ENCODE measurements at regions of chr7 and their contacts with region 1.

Region 1: DNA sequence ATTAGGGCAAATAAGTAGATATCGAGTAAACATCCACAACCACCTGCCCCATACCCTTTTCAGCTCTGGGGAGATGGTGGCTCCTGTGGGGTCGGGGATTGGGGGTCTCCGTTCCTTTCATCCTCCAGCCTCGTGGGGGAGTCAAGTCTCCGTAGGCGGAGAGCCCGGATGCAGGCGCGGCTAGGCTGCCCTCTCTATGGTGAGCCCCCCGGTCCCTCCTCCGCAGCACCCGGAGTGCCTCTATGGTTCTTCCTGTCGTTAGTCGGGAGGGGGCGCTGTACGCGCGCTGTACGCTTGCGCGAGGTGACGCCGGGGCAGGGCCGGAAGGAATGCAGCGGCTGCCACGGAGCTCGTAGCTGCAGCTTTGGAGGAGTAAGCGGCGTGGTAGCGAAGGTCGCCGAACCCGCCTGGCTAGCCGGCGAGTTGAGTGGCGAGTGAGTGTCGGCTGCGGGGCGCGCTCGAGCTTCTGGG is 14.8 kb upstream of the MMD2 start:
- DNase-seq: peak; percentile 69
- ATAC-seq: peak; percentile 96
- H3K4me3 ChIP-seq: peak overlapping the region; percentile 76; the same call in 1 of the 2 replicates
- H3K27ac ChIP-seq: peak overlapping the region; percentile 48
- H3K4me1 ChIP-seq: no peaks in the 10 kb centered on the region
- H3K27me3 ChIP-seq: no peaks in the 10 kb centered on the region
- CTCF ChIP-seq: peak; percentile 85 to 89 (median 86)
- EP300 ChIP-seq: no peak
- POLR2A ChIP-seq: peak; percentile 89
- RAD21 ChIP-seq: peak; percentile 76

Region 2: DNA sequence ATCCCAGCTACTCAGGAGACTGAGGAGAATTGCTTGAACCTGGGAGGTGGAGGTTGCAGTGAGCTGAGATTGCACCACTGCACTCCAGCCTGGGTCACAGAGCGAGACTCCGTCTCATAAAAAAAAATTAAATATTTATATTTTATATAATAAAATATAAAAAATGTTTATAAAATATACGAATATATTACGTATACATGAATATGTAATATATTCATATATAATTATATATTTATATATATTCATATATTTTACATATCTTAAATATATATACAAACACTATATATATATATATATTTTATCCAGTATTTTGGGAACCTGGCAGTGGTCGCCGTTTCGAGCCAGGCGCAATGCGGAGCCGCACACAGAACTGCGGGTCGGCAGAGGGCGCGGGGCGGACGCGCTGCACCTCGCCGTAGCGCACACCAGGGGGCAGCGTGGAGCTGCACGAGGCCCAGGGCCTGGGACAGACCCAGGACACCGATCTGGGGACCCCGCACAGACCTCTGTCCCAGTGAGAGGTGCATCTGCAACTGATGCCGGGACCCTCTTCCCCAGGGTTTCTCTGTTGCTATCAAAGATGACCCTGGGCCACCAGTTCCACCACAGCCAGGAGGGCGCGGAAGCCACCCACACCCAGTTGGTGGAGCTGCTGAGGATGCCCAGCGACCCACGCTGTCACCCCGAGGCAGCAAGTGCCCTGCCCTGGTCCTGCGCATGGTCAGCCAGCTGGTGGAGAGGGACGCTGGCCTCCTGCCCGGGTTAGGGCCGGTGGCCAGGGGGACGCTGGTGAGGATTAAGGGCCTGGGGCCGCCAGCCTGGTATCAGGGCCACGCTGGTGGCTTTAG is 175.7 kb before region 1 on chr7:
- CTCF ChIA-PET with region 1: interaction called, 3 read pairs
- POLR2A ChIA-PET with region 1: no interaction called
- RAD21 ChIA-PET with region 1: interaction called, 10 read pairs
- SMC1A ChIA-PET with region 1: no interaction called
- in situ Hi-C with region 1: no loop called
- intact Hi-C with region 1: loop called (anchors 10 kb)
- DNase-seq: no peak
- ATAC-seq: peak; percentile 92
- H3K4me3 ChIP-seq: no peak overlapping the region
- H3K27ac ChIP-seq: no peak overlapping the region
- H3K4me1 ChIP-seq: no peaks in the 10 kb centered on the region
- H3K27me3 ChIP-seq: no peaks in the 10 kb centered on the region
- CTCF ChIP-seq: peak; percentile 65 to 96 (median 85)
- EP300 ChIP-seq: no peak
- POLR2A ChIP-seq: no peak; the same call in 1 of the 2 replicates
- RAD21 ChIP-seq: peak; percentile 51

Region 3: DNA sequence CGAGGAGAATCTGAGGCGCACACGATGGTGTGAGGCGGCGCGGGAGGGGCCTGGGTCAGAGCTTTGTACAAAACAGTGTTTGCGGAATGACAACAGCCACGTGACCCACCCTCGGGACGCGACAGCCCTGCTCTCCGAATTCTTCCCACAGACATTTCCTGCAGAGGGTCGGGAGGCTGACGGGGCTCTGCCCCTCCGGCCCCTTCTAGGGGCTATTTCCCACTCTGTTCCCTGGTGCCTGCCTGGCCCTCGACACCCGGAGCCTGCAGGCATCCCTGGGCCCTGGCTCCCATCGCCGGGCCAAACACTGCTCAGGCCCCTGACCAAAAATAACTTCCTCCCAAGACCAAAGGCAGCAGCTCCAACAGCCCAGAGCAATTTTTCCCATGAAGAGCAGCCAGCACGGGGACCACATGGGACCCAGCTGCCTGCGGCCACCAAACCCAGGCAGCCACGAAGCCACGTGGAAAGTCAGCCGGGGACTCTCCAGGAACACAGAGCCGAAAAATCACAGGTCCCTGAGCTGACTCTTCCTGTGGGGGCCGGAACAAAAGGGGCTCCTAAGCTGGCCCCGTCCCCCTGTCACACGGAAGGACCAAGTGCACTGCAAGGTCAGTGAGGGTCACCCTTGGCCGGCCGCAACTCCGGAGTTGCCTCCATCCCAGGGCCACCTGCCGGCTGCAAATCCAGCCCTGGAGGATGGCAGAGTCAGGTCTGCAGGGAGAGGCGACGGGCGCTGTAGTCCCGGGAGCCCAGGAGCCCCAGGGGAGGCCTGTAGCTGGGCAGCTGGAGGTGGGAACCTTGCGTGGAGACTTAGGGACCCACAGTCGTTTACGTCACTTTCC is 154.0 kb before region 1 on chr7:
- CTCF ChIA-PET with region 1: no interaction called
- POLR2A ChIA-PET with region 1: no interaction called
- RAD21 ChIA-PET with region 1: no interaction called
- SMC1A ChIA-PET with region 1: no interaction called
- in situ Hi-C with region 1: no loop called
- intact Hi-C with region 1: loop called (anchors 10 kb)
- DNase-seq: no peak
- ATAC-seq: no peak
- H3K4me3 ChIP-seq: no peak overlapping the region
- H3K27ac ChIP-seq: no peak overlapping the region
- H3K4me1 ChIP-seq: no peaks in the 10 kb centered on the region
- H3K27me3 ChIP-seq: no peaks in the 10 kb centered on the region
- CTCF ChIP-seq: no peak
- EP300 ChIP-seq: no peak
- POLR2A ChIP-seq: no peak
- RAD21 ChIP-seq: no peak

Region 4: GRCh38 chr7:4895766-4896165 is 78.0 kb before region 1 on chr7:
- CTCF ChIA-PET with region 1: no interaction called
- POLR2A ChIA-PET with region 1: no interaction called
- RAD21 ChIA-PET with region 1: no interaction called
- SMC1A ChIA-PET with region 1: no interaction called
- in situ Hi-C with region 1: no loop called
- intact Hi-C with region 1: no loop called
- DNase-seq: no peak
- ATAC-seq: no peak
- H3K4me3 ChIP-seq: no peak overlapping the region
- H3K27ac ChIP-seq: no peak overlapping the region
- H3K4me1 ChIP-seq: no peaks in the 10 kb centered on the region
- H3K27me3 ChIP-seq: no peaks in the 10 kb centered on the region
- CTCF ChIP-seq: no peak
- EP300 ChIP-seq: no peak
- POLR2A ChIP-seq: no peak
- RAD21 ChIP-seq: no peak

Region 5: GRCh38 chr7:5045558-5046396 is 72.0 kb after region 1 on chr7 and contains the start of gene RBAK:
- CTCF ChIA-PET with region 1: interaction called, 4 read pairs
- POLR2A ChIA-PET with region 1: no interaction called
- RAD21 ChIA-PET with region 1: no interaction called
- SMC1A ChIA-PET with region 1: no interaction called
- in situ Hi-C with region 1: no loop called
- intact Hi-C with region 1: loop called (anchors 10 kb)
- DNase-seq: peak; percentile 90
- ATAC-seq: peak; percentile 100
- H3K4me3 ChIP-seq: peak within 1 kb of the TSS; percentile 95
- H3K27ac ChIP-seq: peak within 1 kb of the TSS; percentile 69
- H3K4me1 ChIP-seq: no peaks in the 10 kb centered on the region
- H3K27me3 ChIP-seq: no peaks in the 10 kb centered on the region
- CTCF ChIP-seq: no peak
- EP300 ChIP-seq: no peak
- POLR2A ChIP-seq: peak; percentile 90
- RAD21 ChIP-seq: no peak
- polyA plus RNA-seq, gene RBAK: 1.9 to 2.4 TPM

Measured in GM12878 (cell line).